Heart right ventricle (tissue), 16 donors: ENCODE measurements at regions of chr5 and their contacts with region 1.

Region 1: DNA sequence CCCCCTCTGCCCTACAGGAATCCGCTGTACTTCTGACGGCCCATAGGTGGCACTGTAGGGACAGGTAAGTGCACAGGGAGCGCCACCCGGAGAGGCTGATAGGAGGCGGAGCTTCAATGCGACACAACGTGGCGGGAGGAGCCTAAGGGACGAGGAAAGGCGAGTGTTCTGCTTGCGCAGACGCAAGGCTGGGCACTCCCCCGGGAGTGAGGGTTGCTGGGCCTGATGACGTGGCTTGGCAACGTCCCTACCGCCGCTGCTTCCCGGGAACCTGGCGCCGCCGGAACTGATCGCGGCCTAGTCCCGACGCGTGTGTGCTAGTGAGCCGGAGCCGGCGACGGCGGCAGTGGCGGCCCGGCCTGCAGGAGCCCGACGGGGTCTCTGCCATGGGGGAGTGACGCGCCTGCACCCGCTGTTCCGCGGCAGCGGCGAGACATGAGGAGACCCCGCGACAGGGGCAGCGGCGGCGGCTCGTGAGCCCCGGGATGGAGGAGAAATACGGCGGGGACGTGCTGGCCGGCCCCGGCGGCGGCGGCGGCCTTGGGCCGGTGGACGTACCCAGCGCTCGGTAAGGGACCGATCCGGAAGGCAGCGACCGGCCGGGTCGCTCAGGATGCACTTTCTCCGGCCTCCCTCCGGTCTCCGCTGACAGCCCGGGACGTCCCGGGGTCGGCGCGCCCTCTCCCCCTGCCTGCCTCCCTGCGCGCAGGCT is at the start of gene SLC30A5:
- DNase-seq: peak; percentile 99
- ATAC-seq: peak; percentile 100
- H3K4me3 ChIP-seq: peak within 1 kb of the TSS; percentile 68 to 100 (median 83)
- H3K27ac ChIP-seq: peak within 1 kb of the TSS; percentile 86 to 99 (median 96)
- H3K4me1 ChIP-seq: peaks cover 4 to 38% (median 22%) of the 10 kb centered on the region in 9 donors
- H3K27me3 ChIP-seq: no peaks in the 10 kb centered on the region
- CTCF ChIP-seq: peak; percentile 86 to 99 (median 93)
- total RNA-seq, gene SLC30A5: 25.7 to 36.7 (median 32.1) TPM

Region 2: GRCh38 chr5:68544648-68545552 is 549.0 kb before region 1 on chr5:
- intact Hi-C with region 1: no loop called
- DNase-seq: no peak
- ATAC-seq: peak in 6 of 8 donors; percentile 41 to 66 (median 59)
- H3K4me3 ChIP-seq: no peak overlapping the region
- H3K27ac ChIP-seq: no peak overlapping the region
- H3K4me1 ChIP-seq: peaks cover 0 to 8% (median 0%) of the 10 kb centered on the region in 9 donors
- H3K27me3 ChIP-seq: peaks cover 0 to 7% (median 0%) of the 10 kb centered on the region in 7 donors
- CTCF ChIP-seq: no peak

Region 3: GRCh38 chr5:69217548-69218526 is 123.9 kb after region 1 on chr5:
- intact Hi-C with region 1: loop called in 2 of 10 experiments (anchors 10 kb)
- DNase-seq: peak; percentile 97 to 99
- ATAC-seq: peak; percentile 98 to 99 (median 99)
- H3K4me3 ChIP-seq: peak overlapping the region; percentile 75 to 100 (median 87)
- H3K27ac ChIP-seq: peak overlapping the region; percentile 95 to 99 (median 98)
- H3K4me1 ChIP-seq: peaks cover 3 to 37% (median 16%) of the 10 kb centered on the region in 9 donors
- H3K27me3 ChIP-seq: no peaks in the 10 kb centered on the region
- CTCF ChIP-seq: peak in 7 of 9 donors; percentile 24 to 47 (median 40)

Region 4: DNA sequence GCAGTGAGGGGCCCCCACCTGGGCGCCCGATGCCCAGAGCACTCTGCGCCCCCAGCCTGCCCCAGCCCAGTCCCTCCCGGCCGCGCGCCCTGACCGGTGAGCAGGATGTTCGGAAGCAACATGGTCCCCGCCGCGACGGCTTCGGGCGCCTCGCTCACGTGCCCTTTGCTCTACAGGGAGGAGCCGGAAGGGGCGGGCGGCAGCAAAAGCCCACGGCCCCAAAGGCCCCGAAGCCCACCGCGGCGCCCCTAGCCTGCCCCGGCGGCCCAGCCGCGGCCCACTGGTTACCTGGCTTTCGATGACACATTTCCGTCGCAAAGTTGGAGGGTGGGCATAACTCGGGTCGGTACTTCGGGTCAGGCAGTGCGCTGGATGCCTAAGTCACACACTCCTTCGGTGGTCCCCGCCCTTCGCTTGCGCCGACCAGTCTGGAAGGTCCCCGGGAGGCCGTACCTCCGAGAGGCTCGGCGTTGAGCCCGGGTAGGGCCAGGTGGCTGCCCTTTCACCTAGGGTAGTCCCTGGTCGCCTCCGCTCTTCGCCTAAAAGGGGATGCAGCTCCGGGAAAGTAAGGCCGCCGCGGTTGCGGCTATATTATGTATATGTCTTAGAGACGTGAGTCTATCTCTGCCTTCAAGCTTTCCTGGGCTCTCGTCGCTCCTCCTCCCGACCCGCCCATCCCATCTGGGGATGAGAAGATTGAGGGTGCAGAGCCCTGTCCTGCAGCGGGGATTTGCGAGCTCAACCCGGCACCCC is 275.6 kb after region 1 on chr5 and contains the starts of genes AK6, RAD17 and TAF9:
- intact Hi-C with region 1: loop called in 3 of 10 experiments (anchors 5 to 10 kb)
- DNase-seq: peak; percentile 92 to 94
- ATAC-seq: peak; percentile 98 to 99 (median 98)
- H3K4me3 ChIP-seq: peak within 1 kb of the TSS; percentile 52 to 87 (median 78)
- H3K27ac ChIP-seq: peak within 1 kb of the TSS; percentile 95 to 100 (median 99)
- H3K4me1 ChIP-seq: peaks cover 0 to 50% (median 31%) of the 10 kb centered on the region in 9 donors
- H3K27me3 ChIP-seq: no peaks in the 10 kb centered on the region
- CTCF ChIP-seq: peak in 1 of 9 donors; percentile 1
- total RNA-seq, gene AK6: 20.8 to 53.2 (median 28.7) TPM
- total RNA-seq, gene RAD17: 17.5 to 23.5 (median 19.9) TPM
- total RNA-seq, gene TAF9: 36.8 to 51.5 (median 44.5) TPM